OCI-LY7 (cell line): ENCODE measurements at regions of chr7 and their contacts with region 1.

Region 1: GRCh38 chr7:111561885-111562732 is at the start of gene IMMP2L:
- DNase-seq: peak; percentile 93
- H3K4me3 ChIP-seq: peak within 1 kb of the TSS; percentile 76
- H3K27ac ChIP-seq: peak within 1 kb of the TSS; percentile 51
- H3K4me1 ChIP-seq: peaks cover 27% of the 10 kb centered on the region
- CTCF ChIP-seq: peak; percentile 75
- total RNA-seq, gene IMMP2L: 8.0 and 29.3 TPM in 2 replicates

Region 2: DNA sequence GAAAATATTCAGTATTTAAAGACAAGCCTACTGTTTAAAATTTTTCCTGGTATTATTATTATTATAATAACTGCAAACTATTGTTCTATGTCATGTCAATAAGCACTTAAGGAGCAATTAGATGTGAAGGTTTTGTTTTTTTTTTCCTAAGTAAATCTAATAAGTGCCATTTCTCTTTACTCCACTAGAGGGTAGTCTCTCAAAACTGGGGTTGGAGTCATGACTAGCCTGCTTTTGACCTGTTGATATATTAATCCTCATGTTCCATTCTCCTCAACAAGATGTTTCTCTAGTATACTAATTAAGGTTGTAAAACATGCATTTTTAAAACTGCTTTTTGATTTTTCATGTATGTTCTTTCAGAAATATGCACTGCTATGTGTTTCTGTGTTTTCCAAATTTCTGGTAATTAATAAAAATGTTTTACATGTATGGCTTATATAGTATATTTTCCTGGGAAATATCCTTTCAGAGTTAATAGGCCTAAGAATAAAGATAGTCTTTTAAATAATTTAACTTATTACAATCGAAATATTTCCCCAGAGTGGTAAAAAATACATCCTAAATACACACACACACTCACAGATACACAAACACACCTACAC is 472.2 kb before region 1 on chr7:
- CTCF ChIA-PET with region 1: no interaction called
- POLR2A ChIA-PET with region 1: no interaction called
- intact Hi-C with region 1: loop called (anchors 5 kb)
- DNase-seq: peak; percentile 44
- H3K4me3 ChIP-seq: no peak overlapping the region
- H3K27ac ChIP-seq: no peak overlapping the region
- H3K4me1 ChIP-seq: no peaks in the 10 kb centered on the region
- CTCF ChIP-seq: peak; percentile 87

Region 3: DNA sequence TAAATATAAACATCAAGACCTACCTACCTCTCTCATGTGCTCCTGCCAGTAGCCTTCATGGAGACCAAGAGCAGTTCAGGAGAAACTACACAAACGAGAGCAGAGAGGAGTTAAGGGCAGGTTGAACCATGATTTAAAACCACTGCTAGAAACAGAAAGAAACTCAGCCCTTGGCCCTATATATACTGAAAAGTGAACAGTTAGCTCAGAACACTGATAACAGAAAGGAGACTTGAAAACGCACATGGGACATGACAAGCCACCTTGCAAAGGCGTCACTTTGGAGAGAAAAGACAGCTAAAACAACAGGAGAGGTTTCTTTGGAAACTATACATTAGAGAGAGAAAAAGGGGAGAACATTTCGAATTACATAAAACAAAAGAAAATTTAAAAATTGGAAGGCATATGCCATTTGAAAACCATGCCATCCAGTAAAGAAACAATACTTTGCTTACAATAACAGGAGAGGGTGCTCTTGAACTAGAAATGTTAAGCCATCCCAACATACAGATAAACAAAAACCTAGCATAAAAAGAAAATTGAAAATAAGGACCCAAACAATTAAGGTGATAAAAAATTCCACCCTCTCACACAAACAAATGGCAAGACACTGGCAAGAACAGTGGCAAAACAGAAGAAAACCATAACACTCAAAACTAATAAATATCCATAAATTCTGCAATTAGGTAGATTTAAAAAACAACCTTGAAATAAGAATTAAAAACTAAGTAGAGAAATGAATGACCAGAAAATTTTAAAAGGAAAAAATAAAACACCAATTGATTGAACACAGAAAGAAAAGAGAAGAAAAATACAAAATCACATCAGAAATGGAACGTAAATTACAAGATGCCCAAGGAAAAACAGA is 232.5 kb before region 1 on chr7:
- CTCF ChIA-PET with region 1: no interaction called
- POLR2A ChIA-PET with region 1: interaction called, 3 read pairs
- intact Hi-C with region 1: loop called (anchors 10 kb)
- DNase-seq: no peak
- H3K4me3 ChIP-seq: no peak overlapping the region
- H3K27ac ChIP-seq: no peak overlapping the region
- H3K4me1 ChIP-seq: no peaks in the 10 kb centered on the region
- CTCF ChIP-seq: no peak

Region 4: GRCh38 chr7:111486472-111487142 is 75.5 kb before region 1 on chr7:
- CTCF ChIA-PET with region 1: no interaction called
- POLR2A ChIA-PET with region 1: interaction called, 5 read pairs
- intact Hi-C with region 1: loop called (anchors 1 kb)
- DNase-seq: peak; percentile 49
- H3K4me3 ChIP-seq: no peak overlapping the region
- H3K27ac ChIP-seq: no peak overlapping the region
- H3K4me1 ChIP-seq: no peaks in the 10 kb centered on the region
- CTCF ChIP-seq: peak; percentile 91

Region 5: DNA sequence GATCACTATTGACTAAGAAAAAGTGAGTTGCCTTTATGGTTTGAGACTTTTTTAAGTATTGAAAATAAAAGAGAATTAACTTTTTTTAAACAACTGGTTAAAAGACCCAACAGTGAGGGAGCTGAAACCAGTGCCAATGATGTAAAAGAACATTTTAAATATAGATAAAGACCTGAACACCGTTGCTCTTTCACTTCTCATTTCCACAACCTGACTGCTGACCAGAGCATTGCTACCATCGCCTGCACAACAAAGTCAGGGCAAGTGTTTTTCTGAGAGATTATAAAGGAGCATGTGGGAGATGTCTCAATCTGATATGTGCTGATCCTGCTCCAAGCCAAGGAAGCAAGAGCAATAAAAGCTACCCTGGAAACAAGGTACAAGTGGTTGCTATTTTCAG is 34.6 kb before region 1 on chr7:
- CTCF ChIA-PET with region 1: no interaction called
- POLR2A ChIA-PET with region 1: interaction called, 29 read pairs
- intact Hi-C with region 1: loop called (anchors 1 kb)
- DNase-seq: peak; percentile 68
- H3K4me3 ChIP-seq: peak overlapping the region; percentile 56
- H3K27ac ChIP-seq: peak overlapping the region; percentile 84
- H3K4me1 ChIP-seq: peaks cover 59% of the 10 kb centered on the region
- CTCF ChIP-seq: no peak

Region 6: GRCh38 chr7:112022128-112022527 is 460.0 kb after region 1 on chr7:
- CTCF ChIA-PET with region 1: no interaction called
- POLR2A ChIA-PET with region 1: no interaction called
- intact Hi-C with region 1: no loop called
- DNase-seq: no peak
- H3K4me3 ChIP-seq: no peak overlapping the region
- H3K27ac ChIP-seq: no peak overlapping the region
- H3K4me1 ChIP-seq: no peaks in the 10 kb centered on the region
- CTCF ChIP-seq: no peak

Region 7: DNA sequence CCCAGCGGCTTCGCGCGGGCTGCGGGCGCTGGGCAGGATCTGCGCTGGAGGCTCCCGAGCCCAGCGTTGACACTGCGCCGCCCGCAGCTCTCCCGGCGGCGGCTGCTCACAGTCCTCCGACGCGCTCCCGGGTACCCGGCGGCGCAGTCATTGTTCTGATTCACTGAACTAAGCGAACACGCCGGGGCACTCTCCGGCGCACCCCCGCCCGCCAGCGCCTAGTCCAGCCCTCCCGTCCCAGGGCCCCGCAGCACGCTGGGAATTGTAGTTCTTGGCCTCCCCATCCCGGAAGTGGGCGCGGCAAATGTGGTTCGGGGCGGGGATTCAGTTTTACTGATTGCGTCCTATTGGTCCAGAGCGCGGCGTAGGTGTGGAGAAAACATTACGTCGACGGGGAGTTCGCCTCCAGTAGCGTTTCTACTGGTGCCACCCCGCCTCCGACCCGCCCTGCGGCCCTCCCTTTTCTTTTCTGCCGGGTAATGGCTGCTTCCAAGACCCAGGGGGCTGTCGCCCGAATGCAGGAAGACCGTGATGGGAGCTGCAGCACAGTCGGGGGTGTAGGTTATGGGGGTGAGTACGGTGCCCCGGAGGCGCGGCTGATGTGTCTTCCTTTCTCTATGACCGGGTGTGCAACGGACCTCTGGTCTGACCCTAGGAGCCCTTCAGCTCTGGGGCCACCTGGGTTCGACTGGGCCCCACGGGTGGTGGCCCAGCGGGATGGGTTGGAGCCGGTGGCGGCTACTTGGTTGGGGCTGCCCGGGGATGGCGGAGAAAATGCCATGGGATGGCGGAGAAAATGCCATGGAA is 644.3 kb after region 1 on chr7 and contains the starts of genes DOCK4 and ZNF277:
- CTCF ChIA-PET with region 1: no interaction called
- POLR2A ChIA-PET with region 1: interaction called, 3 read pairs
- intact Hi-C with region 1: loop called (anchors 10 kb)
- DNase-seq: peak; percentile 99
- H3K4me3 ChIP-seq: peak within 1 kb of the TSS; percentile 95
- H3K27ac ChIP-seq: no peak within 1 kb of the TSS
- H3K4me1 ChIP-seq: peaks cover 21% of the 10 kb centered on the region
- CTCF ChIP-seq: no peak
- total RNA-seq, gene DOCK4: 1.9 and 4.9 TPM in 2 replicates
- total RNA-seq, gene ZNF277: 16.9 and 18.1 TPM in 2 replicates